Activated T-helper 2 cell treated with anti-CD3 and anti-CD28 coated beads, Interferon-gamma antibody, Interleukin-2, Interleukin-4, amounts not matched to agents 10 μg/mL and 5 μg/mL and 100 μg/mL, durations not matched to agents 14 hours and 24 hours and 36 hours (primary cell): ENCODE measurements at regions of chr22 and their contacts with region 1.

Region 1: DNA sequence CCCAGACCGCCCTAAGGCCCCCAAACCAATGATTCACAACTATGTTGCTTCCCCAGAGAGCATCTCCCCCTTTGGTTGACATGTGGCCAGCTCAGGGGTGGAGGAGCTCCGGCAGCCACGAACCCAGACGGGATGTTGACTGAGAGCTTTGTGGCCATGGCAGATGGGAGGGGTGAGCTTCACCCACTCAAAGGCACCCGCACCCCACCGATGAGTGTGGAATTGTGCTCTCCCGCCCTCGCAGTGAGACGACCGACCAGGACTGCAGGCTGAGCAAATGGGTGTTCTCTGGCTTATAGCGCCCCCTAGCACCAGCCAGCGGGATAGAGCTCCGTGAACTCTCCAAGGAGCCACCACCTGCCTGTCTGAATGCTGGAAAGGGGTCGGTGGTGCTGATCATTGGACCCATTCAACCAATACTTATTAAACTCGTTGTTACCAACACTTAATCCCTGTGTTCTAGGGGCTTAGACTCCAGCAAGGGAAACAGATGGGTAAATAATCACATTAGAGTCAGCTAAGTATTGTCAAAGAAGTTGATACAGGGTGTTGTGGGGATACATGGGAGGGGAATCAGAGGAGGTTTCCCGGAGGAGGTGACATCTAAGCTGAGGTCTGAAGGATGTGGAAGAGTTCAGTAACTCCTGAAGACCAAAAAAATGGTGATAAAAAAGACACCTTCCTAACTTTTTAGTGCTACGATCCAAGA is 4.5 kb upstream of the TIMP3 start:
- DNase-seq: peak; percentile 43
- H3K4me3 Mint-ChIP-seq: no peak overlapping the region
- H3K27ac Mint-ChIP-seq: no peak overlapping the region
- H3K4me1 Mint-ChIP-seq: peaks cover 3% of the 10 kb centered on the region
- H3K27me3 Mint-ChIP-seq: peaks cover 37% of the 10 kb centered on the region

Region 2: DNA sequence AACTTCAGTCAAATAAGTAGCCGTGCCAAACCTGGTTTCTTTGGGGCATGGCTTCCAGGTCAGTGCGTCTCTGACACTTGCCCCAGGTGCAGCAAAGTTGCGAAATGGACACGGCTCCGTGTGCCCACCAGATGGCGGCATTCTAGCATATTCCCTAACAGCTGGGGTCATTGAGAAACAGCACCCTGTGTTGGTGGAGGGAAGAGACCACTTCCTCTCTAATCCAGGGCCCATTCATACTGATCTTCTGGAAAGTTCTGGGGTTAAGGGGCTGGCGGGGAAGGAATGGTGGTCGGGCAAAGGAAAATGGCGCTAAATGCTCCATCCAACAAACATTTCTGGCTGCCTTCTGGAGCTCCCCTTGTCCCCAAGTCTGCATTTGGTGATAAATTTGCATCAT is 136.7 kb before region 1 on chr22:
- intact Hi-C with region 1: loop called (anchors 1 kb)
- DNase-seq: peak; percentile 34
- H3K4me3 Mint-ChIP-seq: no peak overlapping the region
- H3K27ac Mint-ChIP-seq: no peak overlapping the region
- H3K4me1 Mint-ChIP-seq: no peaks in the 10 kb centered on the region
- H3K27me3 Mint-ChIP-seq: peaks cover 5% of the 10 kb centered on the region

Region 3: DNA sequence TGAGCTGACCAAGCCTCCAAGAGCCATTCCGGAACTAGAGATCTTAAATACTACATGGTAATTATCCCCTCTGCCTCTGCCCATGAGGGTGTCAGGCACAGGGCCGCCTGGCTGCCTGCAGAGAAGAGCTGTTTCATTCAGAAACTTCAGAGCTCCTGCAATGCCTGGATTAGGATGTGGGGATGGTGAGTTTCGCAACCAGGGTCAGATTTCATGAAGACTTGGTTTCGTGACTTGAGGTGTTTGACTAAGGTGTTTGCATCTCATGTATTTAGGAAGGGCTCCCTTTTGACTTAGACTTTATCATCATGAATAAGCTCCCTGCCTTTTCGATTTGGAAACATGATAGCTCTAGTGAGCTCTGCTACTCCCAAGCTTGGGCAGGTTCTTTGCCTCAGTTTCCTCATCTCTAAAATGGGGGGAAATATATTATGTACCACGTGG is 13.6 kb after region 1 on chr22:
- intact Hi-C with region 1: no loop called
- DNase-seq: no peak
- H3K4me3 Mint-ChIP-seq: no peak overlapping the region
- H3K27ac Mint-ChIP-seq: no peak overlapping the region
- H3K4me1 Mint-ChIP-seq: no peaks in the 10 kb centered on the region
- H3K27me3 Mint-ChIP-seq: peaks cover 2% of the 10 kb centered on the region